H1 (cell line): ENCODE measurements at regions of chr6 and their contacts with region 1.

Region 1: DNA sequence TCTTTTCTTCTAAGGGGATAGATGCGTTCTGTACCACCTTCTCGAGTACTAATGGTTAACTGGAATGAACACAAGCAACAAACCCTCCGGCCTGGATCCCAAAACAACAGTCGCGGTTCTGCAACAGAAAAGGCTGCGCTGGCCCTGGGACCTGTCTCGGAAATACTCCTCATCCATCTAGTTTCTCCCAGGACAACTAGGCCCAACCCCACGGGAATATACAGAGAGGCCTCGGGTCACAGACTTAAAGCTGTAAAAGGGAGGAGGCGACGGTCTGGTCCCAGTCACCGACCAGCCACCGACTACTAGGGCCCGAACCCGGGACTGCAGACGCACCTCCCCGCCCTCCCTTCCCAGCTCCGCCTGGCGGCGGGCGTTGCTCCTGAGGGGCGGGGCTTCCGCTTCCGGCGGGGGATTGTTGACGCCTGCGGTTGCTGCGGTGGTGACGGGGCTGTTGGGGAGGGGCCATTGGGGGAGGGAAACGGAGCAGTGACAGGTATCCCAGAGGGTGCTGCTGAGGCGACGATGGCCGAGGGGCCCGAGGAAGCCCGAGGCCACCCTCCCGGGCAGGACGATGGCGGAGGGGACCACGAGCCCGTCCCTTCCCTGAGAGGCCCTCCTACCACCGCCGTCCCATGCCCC is at the start of gene FAM8A1:
- DNase-seq: peak; percentile 90 to 96
- H3K4me3 ChIP-seq: peak within 1 kb of the TSS; percentile 53 to 95 (median 72)
- H3K27ac ChIP-seq: peak within 1 kb of the TSS; percentile 46; the same call in 1 of the 2 replicates
- H3K4me1 ChIP-seq: 0 out of 7 replicates have a peak, but pooled peaks cover 0 to 4% (median under 1%) of the 10 kb centered on the region in 4 experiments
- H3K27me3 ChIP-seq: no peaks in the 10 kb centered on the region
- CTCF ChIP-seq: peak; percentile 28 to 57 (median 51)
- EP300 ChIP-seq: no peak
- POLR2A ChIP-seq: peak; percentile 76
- RAD21 ChIP-seq: peak; percentile 17 to 35; a peak in 2 of 4 replicates
- total RNA-seq, gene FAM8A1: 8.8 and 9.2 TPM in 2 replicates

Region 2: DNA sequence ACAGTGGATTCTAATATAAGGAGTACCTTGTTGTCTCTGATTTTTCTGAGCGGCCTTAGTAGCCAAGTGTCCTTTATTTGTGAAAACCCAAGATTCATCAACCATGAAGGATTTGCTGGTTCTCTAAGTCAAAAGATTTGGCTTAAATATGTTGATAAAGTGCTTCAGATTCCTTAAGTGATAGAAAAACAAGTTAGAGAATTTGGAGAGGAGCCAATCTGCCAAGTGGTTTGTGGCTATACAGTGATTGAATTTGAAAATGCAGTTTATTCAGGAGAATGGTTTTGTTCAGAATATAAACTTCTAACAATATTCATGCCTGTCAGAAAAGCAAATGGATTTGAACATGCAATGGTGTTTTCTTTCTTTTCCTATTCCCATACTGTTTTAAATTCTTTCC is 151.8 kb before region 1 on chr6:
- CTCF ChIA-PET with region 1: no interaction called
- POLR2A ChIA-PET with region 1: no interaction called
- DNase-seq: no peak
- H3K4me3 ChIP-seq: no peak overlapping the region
- H3K27ac ChIP-seq: no peak overlapping the region
- H3K4me1 ChIP-seq: no peaks in the 10 kb centered on the region
- H3K27me3 ChIP-seq: no peaks in the 10 kb centered on the region
- CTCF ChIP-seq: no peak
- EP300 ChIP-seq: no peak
- POLR2A ChIP-seq: no peak
- RAD21 ChIP-seq: no peak

Region 3: DNA sequence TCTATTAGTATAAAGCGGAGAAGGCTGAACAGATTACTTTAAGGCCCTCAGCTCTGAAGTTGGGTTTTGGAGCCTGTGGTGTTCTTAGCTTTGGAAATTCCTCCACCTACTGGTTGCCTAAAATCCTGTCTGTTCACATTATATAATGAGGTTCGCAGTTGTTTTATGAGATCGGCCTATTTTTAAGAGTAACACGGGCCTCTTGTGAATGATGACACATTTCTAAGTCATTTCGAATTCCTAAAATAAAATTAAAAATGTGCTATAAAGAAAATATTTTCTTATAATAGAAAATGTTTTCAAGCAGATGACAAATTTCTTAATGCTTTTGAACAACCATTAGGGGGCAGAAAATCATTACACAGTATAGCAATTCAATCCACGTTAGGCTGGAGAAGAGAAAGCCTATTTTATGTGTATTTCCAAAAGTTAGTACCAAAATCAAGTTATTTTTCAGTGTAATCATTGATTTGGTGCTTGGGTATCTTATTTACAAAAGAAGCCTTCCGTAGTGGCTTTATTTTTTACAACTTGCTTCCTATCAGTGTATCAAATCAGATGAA is 15.7 kb before region 1 on chr6:
- CTCF ChIA-PET with region 1: interaction called, 15 read pairs
- POLR2A ChIA-PET with region 1: interaction called, 11 read pairs
- DNase-seq: no peak
- H3K4me3 ChIP-seq: no peak overlapping the region
- H3K27ac ChIP-seq: no peak overlapping the region
- H3K4me1 ChIP-seq: no peaks in the 10 kb centered on the region
- H3K27me3 ChIP-seq: no peaks in the 10 kb centered on the region; a peak in 1 of 7 replicates
- CTCF ChIP-seq: peak in 2 of 3 experiments; percentile 55 to 84; a peak in 3 of 4 replicates
- EP300 ChIP-seq: no peak
- POLR2A ChIP-seq: no peak
- RAD21 ChIP-seq: peak; percentile 88 to 92

Region 4: DNA sequence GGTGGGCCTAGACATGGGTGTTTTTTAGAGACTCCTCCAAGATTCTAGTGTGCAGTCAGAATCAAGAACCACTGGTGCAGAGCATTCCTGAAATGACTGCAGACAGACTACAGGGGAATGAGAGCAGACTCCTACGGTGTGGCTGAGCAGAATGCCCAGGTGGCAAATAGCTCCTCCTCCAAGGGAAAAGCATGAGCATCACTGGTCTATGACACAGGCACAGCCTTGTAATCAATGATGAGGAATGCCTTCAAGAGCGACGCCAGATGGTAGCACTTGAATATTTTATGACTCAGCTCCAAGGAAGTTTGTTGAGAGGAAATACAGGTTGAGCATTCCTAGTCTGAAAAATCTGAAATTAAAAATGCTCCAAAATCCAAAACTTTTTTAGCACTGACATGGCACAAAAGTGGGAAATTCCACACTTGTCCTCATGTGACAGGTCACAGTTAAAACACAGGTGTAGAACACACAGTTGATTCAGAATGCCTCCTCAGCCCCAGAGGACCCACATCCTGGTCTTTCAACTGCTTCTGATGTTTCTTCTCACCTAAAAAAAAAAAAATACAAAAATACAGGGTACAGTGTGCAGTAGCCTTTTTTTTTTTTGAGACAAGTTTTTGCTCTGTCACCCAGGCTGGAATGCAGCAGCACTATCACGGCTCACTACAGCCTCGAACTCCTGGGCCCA is 10.5 kb before region 1 on chr6:
- CTCF ChIA-PET with region 1: interaction called, 15 read pairs
- POLR2A ChIA-PET with region 1: interaction called, 11 read pairs
- DNase-seq: no peak
- H3K4me3 ChIP-seq: no peak overlapping the region
- H3K27ac ChIP-seq: no peak overlapping the region
- H3K4me1 ChIP-seq: no peaks in the 10 kb centered on the region
- H3K27me3 ChIP-seq: no peaks in the 10 kb centered on the region
- CTCF ChIP-seq: no peak
- EP300 ChIP-seq: no peak
- POLR2A ChIP-seq: no peak
- RAD21 ChIP-seq: no peak

Region 5: DNA sequence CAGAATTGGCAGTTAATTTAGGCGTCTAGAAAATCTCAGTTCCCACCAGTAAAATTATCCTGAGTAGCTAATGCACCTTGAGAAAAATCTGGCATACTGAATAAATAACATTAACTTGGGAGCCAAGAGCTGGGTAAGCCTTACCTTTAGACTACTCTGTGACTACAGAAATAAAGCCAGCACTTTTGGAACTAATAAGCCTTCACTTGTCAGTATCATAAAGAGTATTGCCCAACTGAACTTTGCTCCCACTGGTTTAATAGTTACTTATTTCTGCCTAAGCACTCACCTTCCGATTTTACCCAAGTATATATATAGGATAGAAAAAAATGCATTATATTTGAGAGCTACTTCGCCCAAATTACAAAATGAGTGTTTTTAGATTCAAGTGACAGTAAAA is 10.8 kb after region 1 on chr6:
- CTCF ChIA-PET with region 1: interaction called, 3 read pairs
- POLR2A ChIA-PET with region 1: interaction called, 14 read pairs
- DNase-seq: no peak
- H3K4me3 ChIP-seq: no peak overlapping the region
- H3K27ac ChIP-seq: no peak overlapping the region
- H3K4me1 ChIP-seq: no peaks in the 10 kb centered on the region
- H3K27me3 ChIP-seq: no peaks in the 10 kb centered on the region
- CTCF ChIP-seq: no peak
- EP300 ChIP-seq: no peak
- POLR2A ChIP-seq: no peak; a peak in 1 of 3 replicates
- RAD21 ChIP-seq: no peak

Region 6: GRCh38 chr6:17640477-17640917 is 40.5 kb after region 1 on chr6:
- CTCF ChIA-PET with region 1: no interaction called
- POLR2A ChIA-PET with region 1: no interaction called
- DNase-seq: no peak
- H3K4me3 ChIP-seq: no peak overlapping the region
- H3K27ac ChIP-seq: no peak overlapping the region
- H3K4me1 ChIP-seq: no peaks in the 10 kb centered on the region
- H3K27me3 ChIP-seq: no peaks in the 10 kb centered on the region
- CTCF ChIP-seq: no peak
- EP300 ChIP-seq: no peak
- POLR2A ChIP-seq: no peak
- RAD21 ChIP-seq: no peak